Ascending aorta (tissue), 2 donors: ENCODE measurements at regions of chr12 and their contacts with region 1.

Region 1: DNA sequence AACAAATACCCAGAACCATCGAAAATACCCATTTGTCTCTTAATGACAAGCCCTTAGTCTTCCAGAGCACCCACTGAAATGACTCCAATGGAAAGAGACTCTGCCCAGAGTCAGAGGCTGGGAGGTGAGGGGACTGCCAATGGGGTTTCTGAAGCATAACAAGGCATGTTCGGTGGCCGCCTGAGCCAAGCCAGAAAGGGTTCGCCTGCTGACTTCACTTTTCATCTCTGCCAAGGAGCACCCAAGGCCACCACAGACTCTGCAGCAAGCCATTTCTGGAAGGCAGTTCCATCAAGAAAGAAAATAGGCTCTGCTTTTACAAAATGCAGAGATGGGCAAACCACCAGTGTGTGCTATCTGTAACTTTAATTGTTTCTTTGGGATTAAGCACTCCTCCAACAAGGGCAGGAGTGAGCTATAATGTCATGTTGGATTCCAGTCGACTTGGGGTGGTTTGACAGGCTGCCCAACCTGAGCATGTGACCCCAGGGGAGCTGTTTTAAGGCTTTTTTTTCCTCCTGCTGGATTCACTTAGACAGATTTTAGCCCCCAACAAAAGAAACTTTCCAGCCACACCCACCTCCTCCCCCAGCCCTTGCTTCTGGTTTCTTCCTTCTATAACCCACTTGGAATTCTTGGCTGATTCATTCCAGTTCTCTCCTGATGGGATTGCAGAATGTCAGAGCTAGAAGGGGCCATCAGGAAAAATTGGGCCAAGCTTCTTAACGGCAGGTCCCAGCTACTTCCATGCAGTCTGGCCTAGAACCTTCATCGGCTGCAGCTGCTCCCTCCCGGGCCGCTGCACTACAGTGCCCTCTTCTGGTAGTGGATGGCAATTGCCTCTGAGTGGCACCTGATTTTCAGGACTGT is 24.1 kb downstream of the CKAP4 start:
- DNase-seq: peak in 1 of 2 donors; percentile 76
- H3K4me3 ChIP-seq: no peak overlapping the region
- H3K27ac ChIP-seq: no peak overlapping the region
- H3K4me1 ChIP-seq: peaks cover 0 to 4% of the 10 kb centered on the region in 2 donors
- H3K27me3 ChIP-seq: no peaks in the 10 kb centered on the region
- CTCF ChIP-seq: peak; percentile 81 to 97 (median 91)

Region 2: DNA sequence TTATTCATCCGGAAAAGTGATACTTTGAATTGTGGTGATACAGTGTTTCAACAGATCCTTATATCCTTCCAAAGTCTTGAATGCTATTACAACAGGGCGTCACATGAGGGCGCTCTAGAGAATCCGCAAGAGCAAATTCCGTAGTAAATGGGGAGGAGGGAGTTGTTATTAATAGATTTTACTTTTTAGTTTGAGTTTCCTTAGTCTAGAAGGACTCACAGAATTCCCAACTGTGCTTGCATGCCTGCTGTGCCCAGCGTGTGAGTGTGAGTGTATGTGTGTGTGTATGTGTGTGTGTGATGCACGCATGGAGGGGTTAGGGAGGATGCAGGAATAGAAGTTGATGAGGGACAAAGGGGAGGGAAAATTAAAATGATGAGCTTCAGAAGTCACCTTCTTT is 518.0 kb before region 1 on chr12:
- intact Hi-C with region 1: loop called (anchors 5 kb)
- DNase-seq: peak in 1 of 2 donors; percentile 82
- H3K4me3 ChIP-seq: no peak overlapping the region
- H3K27ac ChIP-seq: peak overlapping the region; percentile 74 to 83
- H3K4me1 ChIP-seq: peaks cover 0 to 18% of the 10 kb centered on the region in 2 donors
- H3K27me3 ChIP-seq: no peaks in the 10 kb centered on the region
- CTCF ChIP-seq: peak; percentile 57 to 90 (median 84)

Region 3: GRCh38 chr12:106170285-106170684 is 53.4 kb before region 1 on chr12:
- intact Hi-C with region 1: no loop called
- DNase-seq: no peak
- H3K4me3 ChIP-seq: no peak overlapping the region
- H3K27ac ChIP-seq: no peak overlapping the region
- H3K4me1 ChIP-seq: no peaks in the 10 kb centered on the region
- H3K27me3 ChIP-seq: no peaks in the 10 kb centered on the region
- CTCF ChIP-seq: no peak

Region 4: GRCh38 chr12:106282457-106283097 is 58.9 kb after region 1 on chr12:
- intact Hi-C with region 1: loop called (anchors 1 kb)
- DNase-seq: no peak
- H3K4me3 ChIP-seq: no peak overlapping the region
- H3K27ac ChIP-seq: no peak overlapping the region
- H3K4me1 ChIP-seq: no peaks in the 10 kb centered on the region
- H3K27me3 ChIP-seq: no peaks in the 10 kb centered on the region
- CTCF ChIP-seq: peak; percentile 53 to 67 (median 54)

Region 5: GRCh38 chr12:106941481-106942156 is 717.9 kb after region 1 on chr12:
- intact Hi-C with region 1: no loop called
- DNase-seq: no peak
- H3K4me3 ChIP-seq: no peak overlapping the region
- H3K27ac ChIP-seq: peak overlapping the region; percentile 39 to 43
- H3K4me1 ChIP-seq: peaks cover 0 to 7% of the 10 kb centered on the region in 2 donors
- H3K27me3 ChIP-seq: no peaks in the 10 kb centered on the region
- CTCF ChIP-seq: no peak